ENCODE measurements at regions of chr1 and their contacts with region 1.

Region 1: DNA sequence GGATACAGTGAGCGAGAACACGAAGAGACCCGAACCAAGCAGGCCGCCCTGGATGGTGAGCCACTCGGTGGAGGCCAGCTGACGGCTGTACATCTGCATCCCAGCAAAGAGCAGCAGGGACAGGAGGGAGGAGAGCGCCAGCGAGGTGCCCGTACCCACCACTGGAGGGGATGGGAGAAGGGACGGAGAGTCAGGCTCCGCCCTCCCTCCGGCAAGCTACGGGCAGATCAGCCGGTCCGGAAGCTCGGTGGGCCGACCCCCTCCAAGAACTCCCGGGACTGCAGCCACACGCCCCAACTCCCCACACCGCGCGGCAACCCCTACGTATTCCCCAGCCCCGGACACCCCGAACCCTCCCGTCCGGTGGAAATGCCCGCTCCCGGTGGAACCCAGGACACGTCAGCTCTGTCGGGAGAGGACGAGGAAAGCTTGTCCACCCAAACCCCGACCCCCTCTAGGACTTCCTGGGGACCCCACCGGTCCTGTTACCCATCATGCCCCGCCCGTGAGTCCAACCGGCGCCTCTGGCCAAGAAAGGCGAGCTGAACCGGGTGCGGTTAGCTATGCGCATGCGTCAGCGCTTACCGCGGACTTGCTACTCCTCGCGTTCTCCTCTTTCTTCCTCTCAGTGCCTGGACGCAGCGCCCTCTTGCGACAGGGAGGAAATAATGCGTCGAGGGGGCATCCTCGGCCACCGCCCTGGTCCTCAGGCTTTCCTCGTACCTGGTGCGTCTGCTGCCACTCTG is at the start of gene KRTCAP2:
- DNase-seq: peak; percentile 97
- CTCF ChIP-seq: peak; percentile 98

Region 2: GRCh38 chr1:155135415-155136028 is 37.4 kb before region 1 on chr1 and contains the start of gene SLC50A1:
- CTCF ChIA-PET with region 1: interaction called, 27 read pairs
- POLR2A ChIA-PET with region 1: interaction called, 3 read pairs
- DNase-seq: peak; percentile 96
- CTCF ChIP-seq: no peak

Region 3: GRCh38 chr1:155145491-155145890 is 27.4 kb before region 1 on chr1:
- CTCF ChIA-PET with region 1: interaction called, 15 read pairs
- POLR2A ChIA-PET with region 1: interaction called, 3 read pairs
- DNase-seq: no peak
- CTCF ChIP-seq: no peak

Region 4: GRCh38 chr1:155158979-155159378 is 13.9 kb before region 1 on chr1:
- CTCF ChIA-PET with region 1: interaction called, 21 read pairs
- POLR2A ChIA-PET with region 1: no interaction called
- DNase-seq: no peak
- CTCF ChIP-seq: no peak

Region 5: DNA sequence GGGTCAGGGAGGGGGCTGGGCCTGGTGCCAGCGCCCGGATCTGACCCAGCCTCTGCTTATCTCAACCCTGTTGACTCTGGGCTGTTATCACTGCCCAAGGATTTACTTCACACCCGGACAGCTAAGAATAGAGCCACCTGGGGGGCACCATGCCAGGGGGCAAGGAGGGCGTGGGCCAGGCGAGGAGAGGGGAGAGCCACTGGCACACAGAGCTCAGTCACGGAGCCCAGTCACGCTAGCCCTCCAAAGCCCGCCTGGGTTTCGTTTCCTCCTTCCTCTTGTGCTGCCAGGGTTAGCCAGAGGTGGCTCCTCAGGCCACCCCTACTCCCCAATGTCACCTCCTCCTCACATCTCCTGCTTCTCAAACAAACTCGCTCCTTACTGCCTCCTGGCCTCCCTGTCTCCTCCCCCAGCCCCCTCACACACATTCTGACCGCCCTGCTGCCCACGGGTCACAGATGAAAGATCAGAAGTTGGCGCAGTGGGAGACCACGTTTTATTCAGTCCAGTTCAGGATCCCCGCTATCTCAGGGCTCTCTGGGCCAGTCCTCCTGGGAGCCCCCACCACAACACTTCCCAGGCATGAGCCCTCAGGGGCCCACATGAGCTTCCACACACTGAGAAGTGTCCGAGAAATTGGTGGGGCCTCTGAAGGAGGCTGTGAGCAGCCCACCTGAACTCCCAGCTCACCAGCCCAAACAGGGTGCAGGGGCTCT is 12.6 kb after region 1 on chr1:
- CTCF ChIA-PET with region 1: interaction called, 27 read pairs
- POLR2A ChIA-PET with region 1: no interaction called
- DNase-seq: peak; percentile 87
- CTCF ChIP-seq: no peak

Region 6: DNA sequence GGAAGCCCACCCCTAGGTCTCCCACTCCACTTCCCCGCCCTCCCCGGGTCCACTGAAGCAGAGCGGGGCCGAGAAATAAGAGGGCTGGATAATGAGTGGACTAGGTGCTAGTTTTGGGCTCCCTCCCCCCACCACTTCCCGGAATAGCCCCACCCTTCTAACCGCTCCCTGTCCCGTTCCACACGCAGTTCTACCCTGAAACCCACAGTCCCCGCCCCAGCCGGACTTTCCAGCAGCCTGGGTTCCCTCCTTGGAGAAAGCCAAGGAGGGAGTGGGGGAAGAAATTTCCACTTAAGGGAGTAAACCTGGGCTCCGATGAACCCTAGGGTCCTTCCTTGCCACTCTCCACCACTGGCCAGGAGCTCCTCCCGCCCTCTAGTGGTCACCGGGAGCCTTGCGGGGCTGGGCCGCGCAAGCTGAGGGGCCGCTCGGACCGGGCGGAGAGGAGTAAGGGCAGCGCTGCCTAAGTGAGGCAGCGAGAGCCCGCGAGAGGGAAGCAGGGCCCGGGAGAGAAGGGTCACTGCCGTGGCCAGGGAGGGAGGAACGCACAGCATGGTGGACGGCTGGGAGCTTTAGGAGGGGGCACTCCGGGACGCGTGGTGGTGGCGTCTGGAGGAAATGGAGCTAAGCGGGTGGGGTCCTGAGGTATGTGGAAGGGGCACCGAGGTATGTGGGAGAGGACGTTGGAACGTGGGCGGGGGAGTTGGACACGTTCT is 20.5 kb after region 1 on chr1:
- CTCF ChIA-PET with region 1: interaction called, 167 read pairs
- POLR2A ChIA-PET with region 1: interaction called, 3 read pairs
- DNase-seq: peak; percentile 89
- CTCF ChIP-seq: peak; percentile 99

Region 7: DNA sequence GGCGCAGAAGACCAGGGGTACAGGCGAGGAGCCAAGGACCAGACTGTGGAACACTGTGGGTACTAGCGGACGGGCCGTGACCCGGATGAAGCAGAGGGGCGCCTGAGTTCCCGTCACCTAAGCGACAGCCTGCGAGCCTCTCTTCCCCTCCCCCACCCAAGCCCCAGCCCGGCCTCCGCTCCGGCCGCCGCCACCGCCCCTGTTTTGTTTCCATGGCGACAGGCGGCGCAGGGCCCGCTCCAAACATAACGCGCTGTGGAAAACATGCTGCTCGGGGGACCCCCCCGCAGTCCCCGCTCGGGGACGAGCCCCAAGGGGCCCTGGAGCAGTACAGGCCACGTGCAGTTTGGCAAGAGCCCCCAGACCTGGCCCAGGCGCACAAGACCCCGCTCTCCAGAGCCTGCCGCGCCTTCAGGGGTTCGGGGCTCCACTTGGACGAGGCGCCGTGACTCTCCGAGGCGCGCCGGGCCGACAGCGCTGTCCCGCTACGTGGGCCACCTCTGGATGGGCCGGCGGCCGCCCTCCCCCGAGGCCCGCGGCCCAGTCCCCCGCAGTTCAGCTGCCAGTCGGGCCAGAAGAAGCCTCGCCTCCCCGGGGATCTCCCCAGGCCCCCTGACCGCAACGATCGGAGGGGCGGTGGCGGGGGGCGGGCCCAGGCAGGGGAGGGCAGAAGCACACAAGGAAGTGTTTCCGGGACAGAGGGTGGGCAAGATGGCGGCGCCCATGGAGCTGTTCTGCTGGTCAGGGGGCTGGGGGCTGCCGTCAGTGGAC is 35.8 kb after region 1 on chr1 and contains the start of gene MTX1:
- CTCF ChIA-PET with region 1: interaction called, 10 read pairs
- POLR2A ChIA-PET with region 1: no interaction called
- DNase-seq: peak; percentile 92
- CTCF ChIP-seq: no peak